Heart left ventricle (tissue), 16 donors: ENCODE measurements at regions of chr15 and their contacts with region 1.

Region 1: DNA sequence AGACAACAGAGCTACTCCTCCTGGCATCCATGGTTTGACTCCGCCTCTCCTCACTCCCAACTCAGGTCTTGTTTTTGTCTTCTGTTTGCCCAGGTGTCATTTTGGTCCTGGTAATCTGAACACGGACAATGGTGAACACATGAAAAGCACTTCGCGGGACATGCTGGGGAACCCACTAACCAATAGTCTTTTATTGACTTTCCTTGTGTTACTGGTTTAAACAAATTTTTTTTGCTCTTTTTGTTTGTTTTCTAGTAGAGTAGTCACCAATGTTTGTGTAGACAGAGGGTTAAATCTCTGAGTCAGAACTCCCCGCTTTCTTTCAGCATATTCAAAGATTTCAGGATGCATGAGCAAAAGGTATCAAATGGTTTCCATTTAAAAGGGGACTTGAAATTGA is 38.3 kb downstream of the LARP6 start:
- DNase-seq: no peak
- ATAC-seq: no peak
- H3K4me3 ChIP-seq: no peak overlapping the region
- H3K27ac ChIP-seq: no peak overlapping the region
- H3K4me1 ChIP-seq: peaks cover 0 to 17% (median 3%) of the 10 kb centered on the region in 12 donors
- H3K27me3 ChIP-seq: no peaks in the 10 kb centered on the region
- CTCF ChIP-seq: no peak
- POLR2A ChIP-seq: no peak

Region 2: GRCh38 chr15:70722266-70723121 is 93.2 kb before region 1 on chr15:
- intact Hi-C with region 1: loop called in 2 of 10 experiments (anchors 10 kb)
- DNase-seq: no peak
- ATAC-seq: no peak
- H3K4me3 ChIP-seq: no peak overlapping the region
- H3K27ac ChIP-seq: no peak overlapping the region
- H3K4me1 ChIP-seq: peaks cover 0 to 66% (median 33%) of the 10 kb centered on the region in 12 donors
- H3K27me3 ChIP-seq: no peaks in the 10 kb centered on the region
- CTCF ChIP-seq: peak; percentile 59 to 88 (median 77)
- POLR2A ChIP-seq: no peak